ENCODE measurements at regions of chr1 and their contacts with region 1.

Region 1: GRCh38 chr1:85259118-85259911 is at the start of gene C1orf52:
- DNase-seq: peak; percentile 95
- H3K4me3 ChIP-seq: peak within 1 kb of the TSS; percentile 75 to 99
- H3K27ac ChIP-seq: peak within 1 kb of the TSS; percentile 58 to 61; a peak in 2 of 4 replicates
- H3K4me1 ChIP-seq: peaks cover 4 to 12% of the 10 kb centered on the region in 2 experiments; a peak in 3 of 4 replicates
- H3K27me3 ChIP-seq: no peaks in the 10 kb centered on the region
- CTCF ChIP-seq: peak; percentile 95
- EP300 ChIP-seq: no peak
- RAD21 ChIP-seq: peak; percentile 58
- polyA plus RNA-seq, gene C1orf52: 23.4 and 24.3 TPM in 2 replicates

Region 2: GRCh38 chr1:85109475-85109874 is 149.8 kb before region 1 on chr1:
- CTCF ChIA-PET with region 1: interaction called, 51 read pairs
- POLR2A ChIA-PET with region 1: interaction called, 4 read pairs
- DNase-seq: peak; percentile 57
- H3K4me3 ChIP-seq: no peak overlapping the region; a peak in 1 of 4 replicates
- H3K27ac ChIP-seq: no peak overlapping the region
- H3K4me1 ChIP-seq: no peaks in the 10 kb centered on the region
- H3K27me3 ChIP-seq: peaks cover 6% of the 10 kb centered on the region; the same call in 1 of the 2 replicates
- CTCF ChIP-seq: peak; percentile 60
- EP300 ChIP-seq: no peak
- RAD21 ChIP-seq: peak; percentile 73

Region 3: DNA sequence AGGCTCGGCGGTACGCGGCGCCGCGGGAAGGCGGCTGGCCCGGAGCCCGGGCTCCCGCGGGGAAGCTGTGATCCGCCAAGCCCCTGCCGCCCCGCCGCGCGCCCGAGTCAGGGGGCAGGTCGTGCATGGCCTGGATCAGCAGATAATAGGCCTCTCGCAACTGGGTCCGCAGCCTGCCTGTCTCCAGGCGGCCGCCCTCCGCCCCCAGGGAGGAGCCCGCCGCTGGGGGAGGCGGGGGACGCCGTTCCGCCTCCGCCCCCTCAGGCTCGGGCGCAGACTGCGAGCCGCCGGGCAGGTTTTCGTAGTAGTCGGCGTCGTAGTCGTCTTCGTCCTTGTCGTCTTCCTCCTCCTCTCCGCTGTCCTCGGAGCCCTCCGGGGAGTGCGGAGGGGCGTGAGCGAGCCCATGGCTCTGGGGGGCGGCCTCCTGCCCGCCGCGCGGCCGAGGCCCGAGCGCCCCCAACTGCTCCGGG is 58.4 kb before region 1 on chr1 and contains the start of gene SYDE2:
- CTCF ChIA-PET with region 1: interaction called, 13 read pairs
- POLR2A ChIA-PET with region 1: no interaction called
- DNase-seq: peak; percentile 74
- H3K4me3 ChIP-seq: peak within 1 kb of the TSS; percentile 42 to 59
- H3K27ac ChIP-seq: no peak within 1 kb of the TSS
- H3K4me1 ChIP-seq: peaks cover 0 to 11% of the 10 kb centered on the region in 2 experiments; a peak in 1 of 4 replicates
- H3K27me3 ChIP-seq: peaks cover 72% of the 10 kb centered on the region
- CTCF ChIP-seq: no peak
- EP300 ChIP-seq: no peak
- RAD21 ChIP-seq: no peak
- polyA plus RNA-seq, gene SYDE2: not detected in 2 replicates

Region 4: GRCh38 chr1:85228972-85229371 is 30.3 kb before region 1 on chr1:
- CTCF ChIA-PET with region 1: interaction called, 11 read pairs
- POLR2A ChIA-PET with region 1: interaction called, 3 read pairs
- DNase-seq: no peak
- H3K4me3 ChIP-seq: no peak overlapping the region
- H3K27ac ChIP-seq: no peak overlapping the region
- H3K4me1 ChIP-seq: no peaks in the 10 kb centered on the region
- H3K27me3 ChIP-seq: peaks cover 23% of the 10 kb centered on the region; the same call in 1 of the 2 replicates
- CTCF ChIP-seq: no peak
- EP300 ChIP-seq: no peak
- RAD21 ChIP-seq: no peak

Region 5: GRCh38 chr1:85244271-85245061 is 14.8 kb before region 1 on chr1:
- CTCF ChIA-PET with region 1: interaction called, 23 read pairs
- POLR2A ChIA-PET with region 1: no interaction called
- DNase-seq: peak; percentile 21
- H3K4me3 ChIP-seq: no peak overlapping the region
- H3K27ac ChIP-seq: peak overlapping the region in 1 of 2 experiments; percentile 75; a peak in 2 of 4 replicates
- H3K4me1 ChIP-seq: peaks cover 10 to 34% of the 10 kb centered on the region in 2 experiments; a peak in 3 of 4 replicates
- H3K27me3 ChIP-seq: no peaks in the 10 kb centered on the region
- CTCF ChIP-seq: no peak
- EP300 ChIP-seq: no peak
- RAD21 ChIP-seq: no peak

Region 6: GRCh38 chr1:85276215-85276977 is 17.1 kb after region 1 on chr1 and contains the start of gene BCL10:
- CTCF ChIA-PET with region 1: interaction called, 40 read pairs
- POLR2A ChIA-PET with region 1: interaction called, 20 read pairs
- DNase-seq: peak; percentile 96
- H3K4me3 ChIP-seq: peak within 1 kb of the TSS; percentile 96 to 97
- H3K27ac ChIP-seq: peak within 1 kb of the TSS; percentile 91 to 92
- H3K4me1 ChIP-seq: peaks cover 22 to 28% of the 10 kb centered on the region in 2 experiments
- H3K27me3 ChIP-seq: no peaks in the 10 kb centered on the region
- CTCF ChIP-seq: no peak
- EP300 ChIP-seq: no peak
- RAD21 ChIP-seq: no peak
- polyA plus RNA-seq, gene BCL10: 5.8 and 6.6 TPM in 2 replicates